Activated CD8-positive, alpha-beta memory T cell treated with anti-CD3 and anti-CD28 coated beads, Interleukin-2, amount 10 ng/mL, durations not matched to agents 7 days and 5 days (primary cell): ENCODE measurements at regions of chr21 and their contacts with region 1.

Region 1: GRCh38 chr21:45309069-45309986 is 21.6 kb upstream of the POFUT2 start:
- DNase-seq: peak; percentile 50
- ATAC-seq: peak; percentile 56
- H3K4me3 Mint-ChIP-seq: no peak overlapping the region
- H3K27ac Mint-ChIP-seq: no peak overlapping the region
- H3K4me1 Mint-ChIP-seq: peaks cover 10% of the 10 kb centered on the region
- H3K27me3 Mint-ChIP-seq: peaks cover 14% of the 10 kb centered on the region

Region 2: GRCh38 chr21:45152265-45152746 is 157.0 kb before region 1 on chr21:
- CTCF ChIA-PET with region 1: interaction called, 11 read pairs
- DNase-seq: peak; percentile 92
- ATAC-seq: peak; percentile 97
- H3K4me3 Mint-ChIP-seq: peak overlapping the region; percentile 75
- H3K27ac Mint-ChIP-seq: peak overlapping the region; percentile 88
- H3K4me1 Mint-ChIP-seq: peaks cover 44% of the 10 kb centered on the region
- H3K27me3 Mint-ChIP-seq: no peaks in the 10 kb centered on the region